ENCODE measurements at regions of chr16 and their contacts with region 1.

Region 1: GRCh38 chr16:69589434-69590269 is 23.9 kb downstream of the NFAT5 start:
- DNase-seq: no peak
- H3K4me3 ChIP-seq: no peak overlapping the region
- H3K27ac ChIP-seq: no peak overlapping the region
- H3K4me1 ChIP-seq: peaks cover 5% of the 10 kb centered on the region
- H3K27me3 ChIP-seq: no peaks in the 10 kb centered on the region
- CTCF ChIP-seq: no peak
- EP300 ChIP-seq: no peak
- POLR2A ChIP-seq: no peak

Region 2: GRCh38 chr16:69618307-69618706 is 28.7 kb after region 1 on chr16:
- intact Hi-C with region 1: loop called in 1 of 4 experiments (anchors 1 kb)
- DNase-seq: no peak
- H3K4me3 ChIP-seq: no peak overlapping the region
- H3K27ac ChIP-seq: no peak overlapping the region
- H3K4me1 ChIP-seq: peaks cover 2% of the 10 kb centered on the region
- H3K27me3 ChIP-seq: no peaks in the 10 kb centered on the region
- CTCF ChIP-seq: no peak
- EP300 ChIP-seq: no peak
- POLR2A ChIP-seq: no peak

Measured in ovary (tissue), 10 donors.